Activated CD4-positive, alpha-beta memory T cell treated with anti-CD3 and anti-CD28 coated beads for 36 hours (primary cell): ENCODE measurements at regions of chr2 and their contacts with region 1.

Region 1: DNA sequence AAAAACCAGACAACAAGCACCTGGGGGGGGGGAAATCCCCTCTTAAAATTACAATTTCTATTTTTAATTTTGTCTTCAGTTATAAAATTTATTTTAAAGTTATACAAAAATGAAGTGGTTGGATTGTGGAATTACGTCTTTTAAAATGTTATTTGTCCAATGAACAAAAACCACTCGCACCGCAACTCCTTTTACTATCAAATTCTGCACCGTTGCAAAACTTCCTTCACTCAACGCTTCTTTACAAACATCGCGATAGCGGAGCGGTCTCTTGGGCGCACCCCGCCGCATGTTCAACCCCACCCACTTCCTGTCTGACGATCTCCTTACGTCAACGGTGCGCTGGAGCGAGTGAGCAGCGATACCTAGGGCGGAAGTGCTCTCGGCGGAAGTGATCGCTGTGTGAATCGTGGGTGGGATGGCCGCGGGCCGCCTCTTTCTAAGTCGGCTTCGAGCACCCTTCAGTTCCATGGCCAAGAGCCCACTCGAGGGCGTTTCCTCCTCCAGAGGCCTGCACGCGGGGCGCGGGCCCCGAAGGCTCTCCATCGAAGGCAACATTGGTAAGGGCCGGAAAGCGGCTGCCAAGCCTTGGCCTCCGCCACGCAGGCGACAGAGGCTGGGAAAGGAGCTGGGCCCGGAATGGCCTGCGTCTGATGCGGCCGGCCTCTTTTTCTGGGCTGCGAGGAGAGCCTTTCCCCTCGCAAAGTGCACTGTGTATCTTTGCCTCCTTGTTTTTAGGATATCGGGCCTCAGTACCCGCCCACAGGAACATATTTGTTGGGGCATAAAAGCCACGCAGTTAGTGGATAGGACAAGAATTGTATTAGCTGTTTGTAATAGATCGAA is at the start of gene DGUOK:
- DNase-seq: peak; percentile 99
- H3K4me3 Mint-ChIP-seq: peak within 1 kb of the TSS; percentile 92
- H3K27ac Mint-ChIP-seq: peak within 1 kb of the TSS; percentile 95
- H3K4me1 Mint-ChIP-seq: peaks cover 45% of the 10 kb centered on the region
- H3K27me3 Mint-ChIP-seq: no peaks in the 10 kb centered on the region
- total RNA-seq, gene DGUOK: 101 to 102 TPM

Region 2: DNA sequence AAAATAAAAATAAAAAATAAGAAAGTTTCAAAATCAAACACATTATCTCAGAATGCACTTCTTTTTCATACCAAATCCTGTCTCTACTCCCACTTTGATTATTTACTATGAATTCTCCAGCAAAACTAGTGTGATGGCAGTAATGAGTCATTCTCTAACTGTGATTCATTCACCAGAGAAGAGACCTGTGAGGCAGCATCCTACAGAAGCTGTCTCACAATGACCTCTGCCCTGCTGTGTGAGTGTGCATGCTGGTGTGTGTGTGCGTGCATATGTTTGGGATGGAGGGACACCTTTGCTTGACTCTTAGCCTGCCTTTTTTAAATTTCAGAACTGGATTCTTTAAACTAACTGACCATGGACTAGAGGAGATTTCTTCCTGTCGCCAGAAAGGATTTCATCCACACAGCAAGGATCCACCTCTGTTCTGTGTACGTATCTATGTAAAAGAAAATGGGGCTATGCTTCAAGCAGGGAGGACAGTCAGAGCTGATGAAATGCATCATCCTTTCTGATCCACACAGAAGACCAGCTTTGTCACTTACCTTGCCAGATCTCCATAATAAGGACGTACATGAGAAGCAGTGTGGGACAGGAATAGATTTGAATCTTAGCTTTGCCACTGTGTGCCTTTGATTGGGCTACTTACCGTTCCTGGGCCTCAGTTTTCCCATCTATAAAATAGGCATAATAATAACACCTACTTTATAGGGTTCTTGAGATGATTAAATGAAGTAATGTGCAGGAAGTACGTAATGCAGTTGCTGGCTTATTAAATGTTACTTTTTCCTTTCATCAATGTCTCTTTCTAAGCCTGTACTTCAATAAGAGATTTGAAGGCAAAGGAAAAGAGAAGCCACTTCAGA is 66.8 kb before region 1 on chr2:
- CTCF ChIA-PET with region 1: no interaction called
- POLR2A ChIA-PET with region 1: interaction called, 3 read pairs
- intact Hi-C with region 1: loop called (anchors 1 kb)
- DNase-seq: peak; percentile 76
- H3K4me3 Mint-ChIP-seq: no peak overlapping the region
- H3K27ac Mint-ChIP-seq: peak overlapping the region; percentile 59
- H3K4me1 Mint-ChIP-seq: peaks cover 33% of the 10 kb centered on the region
- H3K27me3 Mint-ChIP-seq: no peaks in the 10 kb centered on the region

Region 3: GRCh38 chr2:73939419-73939818 is 12.7 kb after region 1 on chr2:
- CTCF ChIA-PET with region 1: interaction called, 3 read pairs
- POLR2A ChIA-PET with region 1: interaction called, 13 read pairs
- intact Hi-C with region 1: no loop called
- DNase-seq: peak; percentile 56
- H3K4me3 Mint-ChIP-seq: no peak overlapping the region
- H3K27ac Mint-ChIP-seq: peak overlapping the region; percentile 73
- H3K4me1 Mint-ChIP-seq: peaks cover 85% of the 10 kb centered on the region
- H3K27me3 Mint-ChIP-seq: no peaks in the 10 kb centered on the region

Region 4: GRCh38 chr2:74020702-74021406 is 94.1 kb after region 1 on chr2:
- CTCF ChIA-PET with region 1: no interaction called
- POLR2A ChIA-PET with region 1: no interaction called
- intact Hi-C with region 1: no loop called
- DNase-seq: no peak
- H3K4me3 Mint-ChIP-seq: no peak overlapping the region
- H3K27ac Mint-ChIP-seq: no peak overlapping the region
- H3K4me1 Mint-ChIP-seq: peaks cover 38% of the 10 kb centered on the region
- H3K27me3 Mint-ChIP-seq: no peaks in the 10 kb centered on the region

Region 5: GRCh38 chr2:74147727-74148456 is 221.2 kb after region 1 on chr2 and contains the start of gene BOLA3:
- CTCF ChIA-PET with region 1: interaction called, 3 read pairs
- POLR2A ChIA-PET with region 1: no interaction called
- intact Hi-C with region 1: loop called (anchors 2 kb)
- DNase-seq: peak; percentile 92
- H3K4me3 Mint-ChIP-seq: no peak within 1 kb of the TSS
- H3K27ac Mint-ChIP-seq: no peak within 1 kb of the TSS
- H3K4me1 Mint-ChIP-seq: peaks cover 4% of the 10 kb centered on the region
- H3K27me3 Mint-ChIP-seq: no peaks in the 10 kb centered on the region
- total RNA-seq, gene BOLA3: 97.2 to 99.8 TPM

Region 6: DNA sequence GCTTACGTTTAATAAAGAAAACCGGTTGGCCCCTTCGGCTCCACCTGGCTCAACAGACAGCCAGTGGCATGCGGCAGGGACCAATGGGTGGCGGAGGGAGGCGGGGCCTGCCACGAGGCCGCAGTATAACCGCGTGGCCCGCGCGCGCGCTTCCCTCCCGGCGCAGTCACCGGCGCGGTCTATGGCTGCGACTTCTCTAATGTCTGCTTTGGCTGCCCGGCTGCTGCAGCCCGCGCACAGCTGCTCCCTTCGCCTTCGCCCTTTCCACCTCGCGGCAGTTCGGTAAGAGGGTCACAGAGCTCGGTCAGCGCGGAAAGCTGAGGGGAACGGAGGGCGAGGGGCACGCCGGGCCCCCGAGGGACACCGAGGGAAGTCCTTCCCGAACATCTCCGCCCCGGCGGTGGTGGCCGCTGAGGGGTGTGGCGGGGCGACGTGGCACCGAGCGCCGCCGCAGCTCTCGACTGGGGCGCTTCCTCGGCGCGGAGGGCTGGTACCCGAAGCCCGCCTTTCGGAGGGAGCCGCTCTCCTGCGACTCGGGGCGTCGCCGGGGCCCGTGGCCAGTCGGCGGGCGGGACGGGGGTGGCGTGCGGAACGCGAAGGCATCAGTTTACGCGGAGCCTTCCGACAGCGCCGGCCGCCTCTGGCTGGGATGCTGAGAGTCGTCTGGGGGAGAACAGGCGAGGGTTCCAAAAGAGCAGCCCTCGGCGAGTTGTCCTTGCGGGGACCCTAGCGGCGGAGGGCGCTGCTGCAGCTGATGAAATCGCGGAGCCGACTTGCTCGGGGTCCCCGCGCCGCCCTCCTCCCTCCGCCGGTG is 272.0 kb after region 1 on chr2 and contains the start of gene MTHFD2:
- CTCF ChIA-PET with region 1: no interaction called
- POLR2A ChIA-PET with region 1: no interaction called
- intact Hi-C with region 1: loop called (anchors 2 kb)
- DNase-seq: peak; percentile 95
- H3K4me3 Mint-ChIP-seq: peak within 1 kb of the TSS; percentile 99
- H3K27ac Mint-ChIP-seq: peak within 1 kb of the TSS; percentile 100
- H3K4me1 Mint-ChIP-seq: peaks cover 39% of the 10 kb centered on the region
- H3K27me3 Mint-ChIP-seq: peaks cover 2% of the 10 kb centered on the region
- total RNA-seq, gene MTHFD2: 518 to 525 TPM

Region 7: GRCh38 chr2:74778381-74779264 is 851.9 kb after region 1 on chr2:
- CTCF ChIA-PET with region 1: no interaction called
- POLR2A ChIA-PET with region 1: no interaction called
- intact Hi-C with region 1: no loop called
- DNase-seq: no peak
- H3K4me3 Mint-ChIP-seq: no peak overlapping the region
- H3K27ac Mint-ChIP-seq: no peak overlapping the region
- H3K4me1 Mint-ChIP-seq: peaks cover 12% of the 10 kb centered on the region
- H3K27me3 Mint-ChIP-seq: no peaks in the 10 kb centered on the region